CD4-positive, alpha-beta memory T cell (primary cell): ENCODE measurements at regions of chr9 and their contacts with region 1.

Region 1: DNA sequence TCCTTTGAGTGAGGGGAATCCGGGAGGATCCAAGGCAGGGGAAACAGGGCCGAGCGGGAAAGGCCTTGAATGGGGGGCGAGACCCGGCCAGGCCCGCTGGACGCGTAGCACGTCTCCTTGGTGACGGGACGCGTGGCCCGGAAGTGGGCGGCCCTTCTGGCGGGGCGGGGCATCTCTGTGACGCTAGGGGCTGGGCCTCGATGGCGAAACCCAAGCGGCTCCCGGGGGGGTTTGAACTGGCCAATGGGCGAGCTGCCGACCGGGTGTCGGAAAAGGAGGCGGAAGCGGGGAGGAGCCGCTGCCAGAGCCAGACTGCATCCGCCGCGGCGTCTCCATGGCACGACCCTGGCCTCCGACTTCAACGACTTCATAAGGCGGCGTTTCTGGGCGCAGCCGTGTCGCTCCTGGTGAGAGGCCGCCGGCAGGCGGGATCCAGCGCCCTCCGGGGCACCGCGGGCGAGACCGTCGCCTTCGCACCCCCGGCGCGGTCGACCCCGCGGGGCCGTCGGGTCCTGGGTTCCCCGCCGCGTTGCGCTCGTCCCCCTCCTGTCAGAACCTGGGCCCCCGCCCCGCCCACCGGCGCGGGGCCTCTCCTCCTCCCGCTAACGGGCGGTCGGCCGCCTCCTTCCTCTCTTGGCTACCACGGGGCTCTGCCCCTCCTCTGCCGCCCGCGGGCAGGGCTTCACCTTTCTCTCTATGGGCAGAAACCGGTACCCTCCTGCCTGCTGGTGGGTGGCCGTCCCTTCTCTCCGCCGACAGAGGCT is at the start of gene ODF2:
- DNase-seq: peak; percentile 98
- H3K4me3 ChIP-seq: peak within 1 kb of the TSS; percentile 42 to 85
- H3K4me3 Mint-ChIP-seq: peak within 1 kb of the TSS; percentile 89 to 95 (median 92)
- H3K27ac ChIP-seq: peak within 1 kb of the TSS; percentile 85
- H3K27ac Mint-ChIP-seq: peak within 1 kb of the TSS; percentile 91 to 96 (median 93)
- H3K4me1 ChIP-seq: peaks cover 12% of the 10 kb centered on the region
- H3K4me1 Mint-ChIP-seq: peaks cover 4 to 22% (median 14%) of the 10 kb centered on the region in 4 donors
- H3K27me3 ChIP-seq: no peaks in the 10 kb centered on the region
- H3K27me3 Mint-ChIP-seq: no peaks in the 10 kb centered on the region
- total RNA-seq, gene ODF2: 32.3 to 33.6 TPM

Region 2: GRCh38 chr9:128370826-128371621 is 85.0 kb before region 1 on chr9 and contains the start of gene URM1:
- CTCF ChIA-PET with region 1: no interaction called
- POLR2A ChIA-PET with region 1: interaction called, 7 read pairs
- intact Hi-C with region 1: loop called (anchors 1 kb)
- DNase-seq: peak; percentile 95 to 98 (median 96)
- H3K4me3 ChIP-seq: peak within 1 kb of the TSS; percentile 88 to 95
- H3K4me3 Mint-ChIP-seq: peak within 1 kb of the TSS; percentile 95 to 98 (median 96)
- H3K27ac ChIP-seq: peak within 1 kb of the TSS; percentile 91
- H3K27ac Mint-ChIP-seq: peak within 1 kb of the TSS; percentile 97 to 99 (median 98)
- H3K4me1 ChIP-seq: peaks cover 20% of the 10 kb centered on the region
- H3K4me1 Mint-ChIP-seq: peaks cover 22 to 37% (median 29%) of the 10 kb centered on the region in 4 donors
- H3K27me3 ChIP-seq: no peaks in the 10 kb centered on the region
- H3K27me3 Mint-ChIP-seq: peaks cover 2 to 4% of the 10 kb centered on the region in 2 donors
- total RNA-seq, gene URM1: 44.1 to 45.5 TPM

Region 3: GRCh38 chr9:128438343-128439109 is 17.5 kb before region 1 on chr9:
- CTCF ChIA-PET with region 1: interaction called, 6 read pairs
- POLR2A ChIA-PET with region 1: interaction called, 3 read pairs
- intact Hi-C with region 1: loop called (anchors 1 kb)
- DNase-seq: peak; percentile 60 to 76 (median 66)
- H3K4me3 ChIP-seq: no peak overlapping the region
- H3K4me3 Mint-ChIP-seq: peak overlapping the region in 1 of 8 donors; percentile 10
- H3K27ac ChIP-seq: no peak overlapping the region
- H3K27ac Mint-ChIP-seq: peak overlapping the region in 1 of 7 donors; percentile 23
- H3K4me1 ChIP-seq: peaks cover 7% of the 10 kb centered on the region
- H3K4me1 Mint-ChIP-seq: peaks cover 0 to 11% (median 3%) of the 10 kb centered on the region in 4 donors
- H3K27me3 ChIP-seq: no peaks in the 10 kb centered on the region
- H3K27me3 Mint-ChIP-seq: no peaks in the 10 kb centered on the region

Region 4: GRCh38 chr9:128688512-128689292 is 232.7 kb after region 1 on chr9 and contains the start of gene SET:
- CTCF ChIA-PET with region 1: no interaction called
- POLR2A ChIA-PET with region 1: no interaction called
- intact Hi-C with region 1: no loop called
- DNase-seq: peak; percentile 88 to 95 (median 93)
- H3K4me3 ChIP-seq: peak within 1 kb of the TSS; percentile 63 to 88
- H3K4me3 Mint-ChIP-seq: peak within 1 kb of the TSS; percentile 83 to 95 (median 92)
- H3K27ac ChIP-seq: peak within 1 kb of the TSS; percentile 82
- H3K27ac Mint-ChIP-seq: peak within 1 kb of the TSS; percentile 93 to 98 (median 96)
- H3K4me1 ChIP-seq: peaks cover 67% of the 10 kb centered on the region
- H3K4me1 Mint-ChIP-seq: peaks cover 40 to 67% (median 54%) of the 10 kb centered on the region in 4 donors
- H3K27me3 ChIP-seq: no peaks in the 10 kb centered on the region
- H3K27me3 Mint-ChIP-seq: peaks cover 0 to 1% of the 10 kb centered on the region in 2 donors
- total RNA-seq, gene SET: 261 to 264 TPM

Region 5: GRCh38 chr9:128723866-128724743 is 268.1 kb after region 1 on chr9 and contains the start of gene ZDHHC12:
- CTCF ChIA-PET with region 1: no interaction called
- POLR2A ChIA-PET with region 1: no interaction called
- intact Hi-C with region 1: loop called (anchors 1 kb)
- DNase-seq: peak; percentile 98 to 99 (median 99)
- H3K4me3 ChIP-seq: peak within 1 kb of the TSS; percentile 89 to 95
- H3K4me3 Mint-ChIP-seq: peak within 1 kb of the TSS; percentile 90 to 94 (median 92)
- H3K27ac ChIP-seq: peak within 1 kb of the TSS; percentile 70
- H3K27ac Mint-ChIP-seq: peak within 1 kb of the TSS; percentile 89 to 97 (median 95)
- H3K4me1 ChIP-seq: peaks cover 28% of the 10 kb centered on the region
- H3K4me1 Mint-ChIP-seq: peaks cover 23 to 45% (median 32%) of the 10 kb centered on the region in 4 donors
- H3K27me3 ChIP-seq: no peaks in the 10 kb centered on the region
- H3K27me3 Mint-ChIP-seq: no peaks in the 10 kb centered on the region
- total RNA-seq, gene ZDHHC12: 24.6 to 25.7 TPM